ENCODE measurements at regions of chr17 and their contacts with region 1.

Region 1: DNA sequence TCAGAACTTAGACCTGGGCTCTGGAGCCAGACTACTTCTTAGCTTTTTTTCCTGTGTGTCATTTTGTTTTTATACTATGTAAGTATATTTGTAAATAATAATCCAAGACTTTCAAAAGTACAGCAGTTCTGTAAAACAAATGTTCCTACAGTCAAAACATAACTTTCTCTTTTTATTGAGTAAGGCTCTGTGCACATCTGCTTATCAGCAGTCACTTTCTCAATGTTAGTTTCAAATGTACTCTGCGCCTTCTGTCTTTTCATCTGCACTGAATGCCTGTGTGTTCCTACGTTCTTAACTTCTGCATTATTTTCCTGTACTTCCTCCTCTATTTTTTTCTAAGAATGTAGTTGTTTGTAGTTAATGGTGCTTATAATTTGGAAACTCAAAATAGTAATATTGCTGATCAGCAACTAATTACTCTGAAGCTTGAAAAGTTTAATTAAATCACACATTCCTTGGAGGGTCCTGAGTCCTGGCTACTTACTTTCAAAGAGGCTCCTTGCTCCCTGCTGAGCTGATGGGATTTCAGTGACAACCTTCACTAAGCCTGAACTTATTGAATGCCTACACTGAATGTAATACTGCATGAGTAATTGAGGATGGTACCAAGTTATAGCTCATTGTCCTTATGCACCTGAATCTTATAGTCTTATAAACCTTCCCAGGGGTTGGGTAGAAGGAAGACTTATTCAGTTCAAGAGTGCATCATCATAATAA is 329.9 kb downstream of the KCNJ2 start:
- DNase-seq: no peak
- H3K4me3 ChIP-seq: no peak overlapping the region
- H3K27ac ChIP-seq: peak overlapping the region in 8 of 59 donors; percentile 14 to 53 (median 21)
- H3K27me3 ChIP-seq: no peaks in the 10 kb centered on the region
- CTCF ChIP-seq: no peak

Region 2: GRCh38 chr17:70168977-70169708 is 330.1 kb before region 1 on chr17 and contains the start of gene KCNJ2:
- intact Hi-C with region 1: loop called in 1 of 2 experiments (anchors 10 kb)
- DNase-seq: peak; percentile 43 to 94 (median 89)
- H3K4me3 ChIP-seq: peak within 1 kb of the TSS; percentile 59 to 96 (median 83)
- H3K27ac ChIP-seq: peak within 1 kb of the TSS; percentile 85 to 99 (median 95)
- H3K27me3 ChIP-seq: no peaks in the 10 kb centered on the region
- CTCF ChIP-seq: peak in 13 of 56 donors; percentile 1 to 34 (median 7)
- total RNA-seq, gene KCNJ2: 7.8 to 66.9 (median 21.8) TPM

Region 3: DNA sequence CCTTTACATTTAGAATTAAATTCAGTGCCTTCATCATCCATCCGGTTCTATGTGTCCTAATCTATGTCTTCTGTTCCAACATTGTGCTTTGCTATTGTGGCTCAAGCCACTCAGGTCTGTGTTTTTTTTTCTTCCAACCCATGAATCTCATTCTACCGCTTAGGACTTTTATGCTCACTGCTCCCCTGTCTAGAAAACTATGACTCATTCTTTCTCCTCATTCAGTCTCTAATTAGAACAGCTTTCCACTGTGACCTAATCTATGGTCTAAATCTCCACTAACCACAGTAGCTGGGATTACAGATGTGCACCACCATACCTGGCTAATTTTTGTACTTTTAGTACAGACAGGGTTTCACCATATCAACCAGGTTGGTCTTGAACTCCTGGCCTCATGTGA is 88.8 kb after region 1 on chr17:
- intact Hi-C with region 1: no loop called
- DNase-seq: no peak
- H3K4me3 ChIP-seq: no peak overlapping the region
- H3K27ac ChIP-seq: no peak overlapping the region
- H3K27me3 ChIP-seq: no peaks in the 10 kb centered on the region
- CTCF ChIP-seq: no peak

Region 4: GRCh38 chr17:70604854-70605253 is 105.6 kb after region 1 on chr17:
- intact Hi-C with region 1: loop called in 1 of 2 experiments (anchors 10 kb)
- DNase-seq: no peak
- H3K4me3 ChIP-seq: no peak overlapping the region
- H3K27ac ChIP-seq: peak overlapping the region in 56 of 59 donors; percentile 8 to 100 (median 97)
- H3K27me3 ChIP-seq: no peaks in the 10 kb centered on the region
- CTCF ChIP-seq: no peak

Measured in dorsolateral prefrontal cortex (tissue), 120 donors.